Stomach (tissue), 19 donors: ENCODE measurements at regions of chr3 and their contacts with region 1.

Region 1: GRCh38 chr3:94423578-94423977 is 360.7 kb downstream of the NSUN3 start:
- DNase-seq: no peak
- H3K4me3 ChIP-seq: no peak overlapping the region
- H3K27ac ChIP-seq: no peak overlapping the region
- H3K4me1 ChIP-seq: no peaks in the 10 kb centered on the region
- H3K27me3 ChIP-seq: no peaks in the 10 kb centered on the region
- CTCF ChIP-seq: no peak
- EP300 ChIP-seq: no peak
- POLR2A ChIP-seq: no peak

Region 2: DNA sequence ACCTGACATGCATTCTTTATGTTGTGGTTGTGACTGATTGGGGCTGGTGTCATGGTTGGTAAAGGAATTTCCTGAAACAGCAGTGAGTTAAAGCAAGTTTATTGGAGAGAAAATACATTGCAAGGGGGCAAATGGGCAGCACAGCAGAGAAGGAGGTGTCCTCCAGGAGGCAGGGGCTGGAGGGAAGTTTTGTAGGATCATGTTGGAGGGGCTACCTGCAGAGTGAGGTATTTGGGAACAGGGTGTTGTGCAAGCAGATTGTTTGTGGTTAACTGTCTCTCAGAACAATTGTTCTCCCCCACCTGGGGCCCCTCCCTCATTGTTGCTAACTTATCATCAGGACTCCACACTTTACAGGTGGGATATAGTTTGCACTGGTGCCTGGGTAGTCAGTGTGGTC is 164.7 kb before region 1 on chr3:
- intact Hi-C with region 1: no loop called
- DNase-seq: no peak
- H3K4me3 ChIP-seq: no peak overlapping the region
- H3K27ac ChIP-seq: no peak overlapping the region
- H3K4me1 ChIP-seq: no peaks in the 10 kb centered on the region
- H3K27me3 ChIP-seq: no peaks in the 10 kb centered on the region
- CTCF ChIP-seq: no peak
- EP300 ChIP-seq: no peak
- POLR2A ChIP-seq: no peak

Region 3: GRCh38 chr3:94481226-94481898 is 57.8 kb after region 1 on chr3:
- intact Hi-C with region 1: loop called (anchors 10 kb)
- DNase-seq: no peak
- H3K4me3 ChIP-seq: no peak overlapping the region
- H3K27ac ChIP-seq: no peak overlapping the region
- H3K4me1 ChIP-seq: no peaks in the 10 kb centered on the region
- H3K27me3 ChIP-seq: no peaks in the 10 kb centered on the region
- CTCF ChIP-seq: no peak
- EP300 ChIP-seq: no peak
- POLR2A ChIP-seq: no peak